OCI-LY7 (cell line): ENCODE measurements at regions of chr17 and their contacts with region 1.

Region 1: DNA sequence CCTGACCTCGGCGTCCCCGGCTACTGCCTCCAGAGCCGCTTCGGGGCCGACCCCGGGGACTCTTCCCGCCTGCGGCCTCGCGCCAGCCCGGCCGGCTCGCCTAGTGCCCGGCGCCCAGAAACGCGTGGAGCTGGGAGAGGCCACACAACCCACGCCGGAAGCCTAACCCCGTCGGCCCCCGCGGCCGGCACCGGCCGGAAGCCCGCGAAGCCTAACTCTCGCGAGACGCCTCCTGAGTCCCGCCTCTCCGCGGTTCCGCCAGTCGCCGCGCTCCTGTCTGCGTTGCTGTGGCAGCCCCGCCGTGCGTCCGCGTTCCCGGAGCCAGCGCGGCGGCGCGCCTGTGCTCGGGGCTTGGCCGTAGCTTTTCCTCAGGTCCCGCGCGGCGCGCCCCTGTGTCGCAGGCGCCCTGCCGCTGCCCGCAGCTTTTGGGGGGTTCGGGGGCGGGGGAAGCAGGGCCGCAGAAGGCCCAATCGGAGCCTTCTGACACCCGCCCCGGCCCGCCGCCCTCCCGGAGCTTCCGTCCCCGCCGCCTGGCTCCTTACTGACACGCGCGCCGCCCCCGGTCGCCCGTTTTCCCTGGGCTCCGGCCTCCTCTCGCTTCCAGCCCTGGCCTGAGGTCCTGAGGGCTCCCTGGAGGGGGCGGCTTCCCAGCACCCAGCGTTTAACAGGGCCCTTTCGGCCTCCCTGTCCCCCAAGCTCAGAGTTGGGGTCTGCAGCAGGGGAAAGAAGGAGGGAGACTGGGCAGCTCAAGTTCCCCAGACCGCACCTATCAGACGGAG is 21.7 kb downstream of the NPTX1 start:
- DNase-seq: peak; percentile 100
- H3K4me3 ChIP-seq: peak overlapping the region; percentile 80
- H3K27ac ChIP-seq: peak overlapping the region; percentile 74
- H3K4me1 ChIP-seq: peaks cover 27% of the 10 kb centered on the region
- CTCF ChIP-seq: peak; percentile 25; the same call in 1 of the 2 replicates

Region 2: DNA sequence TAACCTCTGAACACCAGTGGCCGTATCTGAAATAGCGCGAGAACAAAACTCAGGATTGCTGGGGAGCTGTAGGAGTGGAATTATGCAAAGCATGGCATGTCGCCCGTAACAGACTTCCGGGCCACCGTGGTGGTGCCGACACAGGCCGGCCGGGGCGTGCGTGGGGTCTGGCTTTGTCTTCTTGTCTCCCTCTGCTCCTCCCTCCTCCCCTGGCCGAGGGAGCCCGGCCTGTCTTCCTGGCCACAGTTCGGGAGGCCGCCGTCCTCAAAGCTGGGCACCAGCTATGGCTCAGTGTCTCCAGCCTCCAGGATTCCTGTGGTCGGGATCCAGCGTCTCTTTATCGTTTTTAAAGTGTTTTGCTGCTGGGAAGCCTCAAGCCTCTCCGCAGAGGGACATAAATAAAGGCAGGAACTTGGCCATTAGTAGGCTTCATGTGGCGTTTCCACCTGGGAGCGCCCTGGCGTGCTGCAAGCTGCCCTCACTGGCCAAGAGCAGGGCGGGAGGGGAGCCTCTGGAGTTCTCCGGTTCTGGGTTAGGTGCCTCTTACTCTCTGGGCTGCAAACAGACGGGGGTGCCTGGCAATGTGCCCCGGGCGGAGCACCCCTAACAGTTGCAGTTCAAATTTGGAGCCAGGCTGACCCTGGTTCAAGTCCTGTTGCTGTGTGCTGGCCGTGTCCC is 43.6 kb after region 1 on chr17:
- CTCF ChIA-PET with region 1: no interaction called
- POLR2A ChIA-PET with region 1: interaction called, 10 read pairs
- intact Hi-C with region 1: no loop called
- DNase-seq: peak; percentile 97
- H3K4me3 ChIP-seq: peak overlapping the region; percentile 62
- H3K27ac ChIP-seq: peak overlapping the region; percentile 60
- H3K4me1 ChIP-seq: peaks cover 24% of the 10 kb centered on the region
- CTCF ChIP-seq: no peak